Activated CD4-positive, alpha-beta T cell treated with anti-CD3 and anti-CD28 coated beads, Interleukin-2, amount 10 ng/mL, durations not matched to agents 24 days and 14 days (primary cell): ENCODE measurements at regions of chr6 and their contacts with region 1.

Region 1: GRCh38 chr6:158649289-158650143 is at the start of gene SYTL3:
- DNase-seq: peak; percentile 95
- H3K4me3 Mint-ChIP-seq: peak within 1 kb of the TSS; percentile 91
- H3K27ac Mint-ChIP-seq: peak within 1 kb of the TSS; percentile 94
- H3K4me1 Mint-ChIP-seq: peaks cover 77% of the 10 kb centered on the region
- H3K27me3 Mint-ChIP-seq: no peaks in the 10 kb centered on the region
- total RNA-seq, gene SYTL3: 102 and 106 TPM in 2 replicates

Region 2: GRCh38 chr6:158207422-158207788 is 442.1 kb before region 1 on chr6:
- intact Hi-C with region 1: loop called (anchors 1 kb)
- DNase-seq: peak; percentile 90
- H3K4me3 Mint-ChIP-seq: peak overlapping the region; percentile 70
- H3K27ac Mint-ChIP-seq: peak overlapping the region; percentile 90
- H3K4me1 Mint-ChIP-seq: peaks cover 45% of the 10 kb centered on the region
- H3K27me3 Mint-ChIP-seq: no peaks in the 10 kb centered on the region

Region 3: DNA sequence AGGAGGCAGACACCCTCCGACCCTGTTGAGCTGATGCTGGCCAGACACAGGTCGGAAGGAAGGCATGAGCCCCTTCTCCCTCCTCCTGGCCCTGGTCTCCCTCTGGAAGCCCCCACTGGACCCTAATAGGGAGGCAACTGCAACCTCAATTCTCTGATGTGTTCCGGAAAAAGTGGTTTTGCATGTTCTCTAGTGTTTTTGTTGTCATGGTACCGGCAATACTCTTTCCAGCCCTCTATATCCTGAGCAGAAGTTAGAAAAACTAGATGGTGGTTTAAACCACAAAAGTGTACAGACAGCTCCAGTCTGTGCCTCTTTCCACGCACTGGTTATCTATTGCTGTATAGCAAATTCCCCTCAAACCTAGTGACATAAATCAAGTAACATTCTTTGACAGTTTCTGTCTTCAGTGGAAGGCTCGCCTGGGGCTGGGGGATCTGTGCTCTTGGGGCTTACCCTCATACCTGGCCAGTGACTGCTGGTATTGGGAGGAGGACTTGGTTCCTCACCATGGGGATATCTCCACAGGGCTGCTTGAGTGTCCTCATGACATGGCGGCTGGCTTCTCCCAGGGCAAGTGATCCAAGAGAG is 37.4 kb after region 1 on chr6:
- intact Hi-C with region 1: loop called (anchors 1 kb)
- DNase-seq: peak; percentile 90
- H3K4me3 Mint-ChIP-seq: peak overlapping the region; percentile 53
- H3K27ac Mint-ChIP-seq: peak overlapping the region; percentile 86
- H3K4me1 Mint-ChIP-seq: peaks cover 47% of the 10 kb centered on the region
- H3K27me3 Mint-ChIP-seq: no peaks in the 10 kb centered on the region

Region 4: DNA sequence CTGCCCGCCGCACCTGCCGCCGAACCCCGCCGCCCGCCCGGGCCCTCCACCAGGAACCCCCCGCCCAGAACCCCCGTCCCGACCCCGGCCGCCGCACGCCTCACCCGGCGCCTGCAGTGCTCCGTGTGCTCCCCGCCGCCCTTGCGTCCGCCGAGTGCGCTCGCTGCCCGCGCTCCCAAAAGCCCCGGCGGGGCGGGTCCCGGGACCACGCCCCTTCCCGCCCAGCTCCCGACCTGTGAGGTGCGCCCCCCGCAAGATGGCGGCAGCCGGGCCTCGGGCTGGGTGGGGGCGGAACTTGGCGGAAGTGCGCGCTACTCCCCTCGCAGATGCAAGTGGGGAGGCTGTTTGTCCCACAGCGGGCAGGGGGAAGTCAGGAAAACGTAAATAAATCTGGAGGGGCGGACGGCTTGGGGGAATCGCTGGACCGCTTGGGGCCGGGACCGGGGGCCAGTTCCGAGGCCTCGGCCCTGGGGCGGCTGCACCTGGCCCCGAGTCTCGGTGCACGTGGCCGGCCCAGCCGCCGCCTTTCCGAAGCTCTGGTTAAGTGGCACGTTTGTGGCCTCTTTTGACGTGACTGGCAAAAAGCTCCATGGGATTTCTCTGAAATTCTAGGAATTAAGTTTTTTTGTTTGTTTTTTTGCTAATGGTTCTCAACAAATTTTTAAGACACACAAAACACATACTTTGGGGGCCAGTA is 169.8 kb after region 1 on chr6 and contains the start of gene EZR:
- intact Hi-C with region 1: loop called (anchors 2 kb)
- DNase-seq: peak; percentile 93
- H3K4me3 Mint-ChIP-seq: peak within 1 kb of the TSS; percentile 88
- H3K27ac Mint-ChIP-seq: peak within 1 kb of the TSS; percentile 92
- H3K4me1 Mint-ChIP-seq: peaks cover 32% of the 10 kb centered on the region
- H3K27me3 Mint-ChIP-seq: no peaks in the 10 kb centered on the region
- total RNA-seq, gene EZR: 204 and 215 TPM in 2 replicates

Region 5: DNA sequence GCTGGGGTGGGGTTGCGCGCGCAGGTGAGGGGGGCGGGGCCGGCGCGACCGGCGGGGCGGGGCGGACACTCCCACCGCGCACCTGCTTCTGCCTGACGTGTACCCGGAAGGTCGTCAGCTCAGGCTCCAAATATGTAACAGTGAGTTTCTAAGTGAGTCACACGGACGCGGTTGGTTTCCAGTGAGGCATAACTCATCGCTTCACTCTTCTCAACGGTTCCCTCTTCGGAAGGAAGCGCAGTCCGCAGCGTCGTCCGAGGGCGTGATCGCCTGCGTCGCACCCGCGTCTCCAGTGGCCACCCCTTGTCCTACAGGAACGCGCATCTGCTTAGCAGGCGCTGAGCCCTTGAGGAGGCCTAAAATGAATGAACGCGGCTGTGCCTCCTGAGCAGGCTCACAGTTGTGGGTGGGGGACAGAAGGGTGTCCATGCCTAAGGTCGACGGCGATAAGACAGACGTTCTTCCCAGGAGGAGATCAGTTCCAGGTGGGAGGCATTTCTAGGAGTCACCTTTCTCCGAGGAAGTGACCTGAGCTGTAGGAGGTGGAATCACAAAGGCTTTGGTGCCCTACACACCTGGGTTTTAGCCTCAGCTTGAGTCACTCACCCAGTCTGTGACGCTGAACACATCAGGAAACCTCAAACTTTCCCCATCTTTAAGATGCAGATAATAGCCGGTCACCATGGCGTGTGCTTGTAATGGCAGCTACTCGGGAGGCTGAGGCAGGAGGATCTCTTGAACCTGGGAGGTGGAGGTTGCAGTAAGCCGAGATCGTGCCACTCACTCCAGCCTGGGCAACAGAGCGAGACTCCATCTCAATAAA is 220.5 kb after region 1 on chr6:
- intact Hi-C with region 1: loop called (anchors 2 kb)
- DNase-seq: peak; percentile 96
- H3K4me3 Mint-ChIP-seq: peak overlapping the region; percentile 86
- H3K27ac Mint-ChIP-seq: peak overlapping the region; percentile 98
- H3K4me1 Mint-ChIP-seq: peaks cover 29% of the 10 kb centered on the region
- H3K27me3 Mint-ChIP-seq: peaks cover 4% of the 10 kb centered on the region

Region 6: DNA sequence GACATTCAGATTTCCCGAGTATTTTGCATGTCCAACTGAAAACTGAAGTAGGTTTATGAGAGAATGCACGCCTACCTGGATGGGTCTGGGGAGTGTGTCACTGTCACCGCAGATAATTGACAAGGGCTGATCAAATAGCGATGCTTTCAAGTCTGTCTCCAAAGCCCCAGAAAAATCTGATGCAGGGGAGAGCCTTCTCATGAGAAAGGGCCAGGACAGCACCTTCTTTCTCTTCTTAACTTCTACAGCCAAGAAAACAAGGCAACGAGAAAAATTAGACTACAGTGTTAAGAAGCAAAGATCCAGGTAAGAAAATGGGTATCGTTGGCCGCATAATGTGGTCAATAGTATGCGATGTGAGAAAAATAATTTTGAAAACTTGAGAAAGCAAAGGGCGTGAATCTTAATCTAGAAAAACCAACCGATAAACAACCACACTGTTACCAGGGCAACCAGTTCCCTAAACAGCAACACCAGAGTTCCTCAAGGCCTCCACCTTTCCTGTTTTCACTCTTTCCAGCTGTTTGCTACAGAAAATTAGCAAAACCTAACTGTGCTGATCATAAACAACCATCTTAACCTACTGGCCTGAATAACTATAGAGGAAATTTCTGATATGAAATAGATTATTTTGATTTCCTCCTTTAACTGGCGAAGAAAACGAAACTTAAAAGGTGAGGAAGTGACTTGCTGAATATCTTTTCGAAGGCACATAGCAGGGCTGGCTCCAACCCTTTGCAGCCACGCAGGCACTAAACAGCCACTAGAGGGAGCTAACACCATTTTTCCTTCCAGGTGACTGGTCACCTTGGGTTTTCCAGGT is 392.7 kb after region 1 on chr6:
- intact Hi-C with region 1: loop called (anchors 2 kb)
- DNase-seq: peak; percentile 93
- H3K4me3 Mint-ChIP-seq: peak overlapping the region; percentile 94
- H3K27ac Mint-ChIP-seq: peak overlapping the region; percentile 99
- H3K4me1 Mint-ChIP-seq: peaks cover 58% of the 10 kb centered on the region
- H3K27me3 Mint-ChIP-seq: no peaks in the 10 kb centered on the region